ENCODE measurements at regions of chr3 and their contacts with region 1.

Region 1: GRCh38 chr3:52220380-52221026 is 4.9 kb downstream of the TLR9 start:
- DNase-seq: peak; percentile 71
- H3K4me3 ChIP-seq: no peak overlapping the region
- H3K27ac ChIP-seq: no peak overlapping the region
- H3K4me1 ChIP-seq: no peaks in the 10 kb centered on the region
- H3K27me3 ChIP-seq: no peaks in the 10 kb centered on the region
- CTCF ChIP-seq: peak; percentile 72

Region 2: DNA sequence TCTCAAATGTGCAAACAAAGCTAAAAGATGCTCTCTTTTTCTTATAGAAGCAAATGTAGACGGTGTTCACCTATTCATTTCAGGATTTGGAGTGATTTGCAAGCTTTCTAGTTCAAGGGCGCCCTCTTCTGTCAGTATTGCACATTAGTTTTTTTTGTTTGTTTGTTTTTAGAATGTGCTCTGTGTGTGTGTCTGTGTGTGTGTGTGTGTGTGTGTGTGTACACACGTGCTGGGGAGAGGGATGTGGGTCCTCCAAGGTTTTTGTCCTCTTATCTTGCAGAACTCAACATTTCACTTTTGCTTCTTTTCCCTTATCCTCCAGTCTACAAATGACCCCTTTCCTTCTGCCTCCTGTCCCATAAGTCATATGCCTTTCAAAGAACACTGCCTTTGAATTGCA is 119.1 kb after region 1 on chr3:
- CTCF ChIA-PET with region 1: interaction called, 13 read pairs
- POLR2A ChIA-PET with region 1: no interaction called
- intact Hi-C with region 1: loop called (anchors 1 kb)
- DNase-seq: peak; percentile 71
- H3K4me3 ChIP-seq: no peak overlapping the region
- H3K27ac ChIP-seq: no peak overlapping the region
- H3K4me1 ChIP-seq: no peaks in the 10 kb centered on the region
- H3K27me3 ChIP-seq: no peaks in the 10 kb centered on the region
- CTCF ChIP-seq: peak; percentile 60

Region 3: DNA sequence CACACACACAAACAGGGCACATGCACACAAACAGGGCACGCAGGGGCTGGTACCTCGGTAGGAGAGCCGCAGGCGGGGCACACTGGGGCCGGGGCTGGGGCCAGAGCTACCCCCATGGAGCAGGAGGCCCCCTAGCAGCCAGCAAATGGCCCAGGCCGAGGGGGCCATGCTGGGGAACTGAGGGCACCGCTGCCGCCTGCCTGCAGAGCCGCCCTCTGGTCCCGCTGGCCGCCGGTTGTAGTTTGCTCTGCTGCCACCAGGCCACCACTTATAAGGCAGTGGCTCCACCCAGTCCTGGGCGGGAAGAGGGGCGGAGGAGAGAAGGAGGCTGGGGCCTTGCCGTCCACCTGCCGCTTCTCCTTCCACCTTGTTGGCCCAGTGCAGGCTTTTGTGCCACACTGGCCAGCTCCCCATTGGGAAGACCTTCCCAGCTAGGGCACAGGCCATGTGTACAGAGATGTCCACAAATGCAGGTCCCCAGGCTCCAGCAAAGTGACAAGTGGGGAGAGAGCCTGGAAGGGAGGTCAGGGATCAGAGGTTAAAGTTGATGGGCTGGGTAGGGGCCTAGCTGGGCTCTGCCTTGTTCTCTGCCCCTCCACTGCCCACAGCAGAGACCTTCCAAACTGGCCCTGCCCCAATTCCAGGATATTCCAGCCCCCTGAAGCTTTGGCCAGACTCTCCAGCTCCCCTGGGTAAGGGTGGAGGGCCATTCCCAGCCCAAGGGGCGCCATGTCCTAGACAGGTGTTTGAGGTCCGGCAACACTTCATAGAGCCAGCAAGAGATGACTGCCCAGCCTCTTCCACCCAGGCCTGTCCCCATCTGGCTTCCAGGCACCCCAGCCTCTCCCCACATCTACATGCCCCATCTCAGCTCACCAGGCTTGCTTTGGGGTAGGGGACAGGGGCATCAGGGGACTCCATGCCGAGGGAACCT is 224.6 kb after region 1 on chr3 and contains the start of gene SEMA3G:
- CTCF ChIA-PET with region 1: no interaction called
- POLR2A ChIA-PET with region 1: no interaction called
- intact Hi-C with region 1: loop called (anchors 5 kb)
- DNase-seq: peak; percentile 52
- H3K4me3 ChIP-seq: no peak within 1 kb of the TSS
- H3K27ac ChIP-seq: no peak within 1 kb of the TSS
- H3K4me1 ChIP-seq: no peaks in the 10 kb centered on the region
- H3K27me3 ChIP-seq: no peaks in the 10 kb centered on the region
- CTCF ChIP-seq: no peak
- total RNA-seq, gene SEMA3G: 0.07 TPM in 1 of 2 replicates, not detected in the other

Region 4: GRCh38 chr3:52809662-52810377 is 589.3 kb after region 1 on chr3:
- CTCF ChIA-PET with region 1: no interaction called
- POLR2A ChIA-PET with region 1: no interaction called
- intact Hi-C with region 1: no loop called
- DNase-seq: no peak
- H3K4me3 ChIP-seq: no peak overlapping the region
- H3K27ac ChIP-seq: no peak overlapping the region
- H3K4me1 ChIP-seq: no peaks in the 10 kb centered on the region
- H3K27me3 ChIP-seq: no peaks in the 10 kb centered on the region
- CTCF ChIP-seq: no peak

Measured in A673 (cell line).